ENCODE measurements at regions of chr5 and their contacts with region 1.

Region 1: DNA sequence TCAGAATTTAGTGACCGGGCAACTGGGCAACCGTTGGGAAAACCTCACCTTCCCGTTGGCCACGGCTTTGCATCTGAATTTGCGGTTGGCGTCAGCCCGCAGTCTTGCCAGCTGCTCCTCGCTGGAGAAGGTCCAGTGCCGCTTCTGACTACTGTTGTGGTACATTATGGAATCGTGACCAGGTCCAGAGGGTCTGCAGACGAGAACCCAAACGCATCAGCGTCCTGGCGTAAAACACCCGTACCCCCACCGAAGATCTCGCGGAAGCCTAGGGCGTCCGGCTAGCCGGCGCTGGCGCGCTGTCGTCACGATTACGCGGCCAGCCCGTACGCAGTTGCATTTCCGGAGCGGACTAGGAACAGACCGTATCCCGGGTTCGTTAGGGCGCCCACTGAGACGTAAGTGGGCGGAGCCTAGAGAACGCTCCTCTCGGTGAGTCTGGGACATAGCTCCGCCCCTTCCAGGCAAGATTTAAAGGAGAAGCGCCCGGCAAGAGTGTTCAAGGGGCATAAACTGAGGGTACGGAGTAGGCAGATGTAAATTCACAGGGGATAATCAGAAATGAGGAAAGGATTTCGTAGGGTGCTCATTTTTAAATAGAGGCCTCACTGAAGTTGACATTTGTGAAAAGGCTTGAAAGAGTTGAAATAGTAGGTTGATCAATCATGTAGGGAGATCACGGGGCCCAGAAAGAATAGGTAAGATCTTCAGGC is at the start of gene CCNH:
- DNase-seq: peak; percentile 93
- ATAC-seq: peak; percentile 95
- H3K4me3 ChIP-seq: peak within 1 kb of the TSS; percentile 93
- H3K27ac ChIP-seq: peak within 1 kb of the TSS; percentile 95
- H3K4me1 ChIP-seq: peaks cover 3% of the 10 kb centered on the region; the same call in 1 of the 2 replicates
- H3K27me3 ChIP-seq: no peaks in the 10 kb centered on the region
- CTCF ChIP-seq: no peak
- EP300 ChIP-seq: no peak
- POLR2A ChIP-seq: peak; percentile 97
- RAD21 ChIP-seq: no peak
- polyA plus RNA-seq, gene CCNH: 110 to 116 TPM

Region 2: GRCh38 chr5:86617756-86618576 is 794.8 kb before region 1 on chr5 and contains the start of gene COX7C:
- CTCF ChIA-PET with region 1: no interaction called
- POLR2A ChIA-PET with region 1: no interaction called
- RAD21 ChIA-PET with region 1: no interaction called
- SMC1A ChIA-PET with region 1: no interaction called
- in situ Hi-C with region 1: loop called (anchors 25 kb)
- intact Hi-C with region 1: loop called (anchors 10 kb)
- DNase-seq: peak; percentile 97
- ATAC-seq: peak; percentile 96
- H3K4me3 ChIP-seq: peak within 1 kb of the TSS; percentile 71
- H3K27ac ChIP-seq: peak within 1 kb of the TSS; percentile 80
- H3K4me1 ChIP-seq: peaks cover 8% of the 10 kb centered on the region
- H3K27me3 ChIP-seq: no peaks in the 10 kb centered on the region
- CTCF ChIP-seq: no peak
- EP300 ChIP-seq: no peak
- POLR2A ChIP-seq: peak; percentile 91
- RAD21 ChIP-seq: no peak
- polyA plus RNA-seq, gene COX7C: 1,573 to 1,591 TPM

Region 3: DNA sequence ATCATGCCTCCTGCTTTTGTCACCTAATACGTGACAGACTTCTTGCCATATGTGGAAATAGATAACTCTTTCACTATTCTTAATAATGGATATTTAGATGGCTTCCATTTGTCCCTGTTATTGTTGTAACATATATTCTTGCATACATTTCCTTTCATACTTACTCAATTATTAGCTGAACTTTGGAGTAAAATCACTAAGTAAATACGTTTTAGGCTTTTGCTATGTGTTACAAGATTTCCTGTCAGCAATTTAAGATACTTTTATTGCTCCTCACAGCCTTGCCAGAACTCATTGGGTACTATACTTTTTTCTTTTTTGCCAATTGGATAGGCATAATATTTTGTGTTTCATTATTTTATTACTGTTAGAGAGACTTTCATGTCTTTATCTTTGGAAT is 27.0 kb before region 1 on chr5:
- CTCF ChIA-PET with region 1: no interaction called
- POLR2A ChIA-PET with region 1: no interaction called
- RAD21 ChIA-PET with region 1: no interaction called
- SMC1A ChIA-PET with region 1: no interaction called
- in situ Hi-C with region 1: no loop called
- intact Hi-C with region 1: no loop called
- DNase-seq: no peak
- ATAC-seq: no peak
- H3K4me3 ChIP-seq: no peak overlapping the region
- H3K27ac ChIP-seq: no peak overlapping the region
- H3K4me1 ChIP-seq: no peaks in the 10 kb centered on the region
- H3K27me3 ChIP-seq: no peaks in the 10 kb centered on the region
- CTCF ChIP-seq: no peak
- EP300 ChIP-seq: no peak
- POLR2A ChIP-seq: no peak
- RAD21 ChIP-seq: no peak

Region 4: DNA sequence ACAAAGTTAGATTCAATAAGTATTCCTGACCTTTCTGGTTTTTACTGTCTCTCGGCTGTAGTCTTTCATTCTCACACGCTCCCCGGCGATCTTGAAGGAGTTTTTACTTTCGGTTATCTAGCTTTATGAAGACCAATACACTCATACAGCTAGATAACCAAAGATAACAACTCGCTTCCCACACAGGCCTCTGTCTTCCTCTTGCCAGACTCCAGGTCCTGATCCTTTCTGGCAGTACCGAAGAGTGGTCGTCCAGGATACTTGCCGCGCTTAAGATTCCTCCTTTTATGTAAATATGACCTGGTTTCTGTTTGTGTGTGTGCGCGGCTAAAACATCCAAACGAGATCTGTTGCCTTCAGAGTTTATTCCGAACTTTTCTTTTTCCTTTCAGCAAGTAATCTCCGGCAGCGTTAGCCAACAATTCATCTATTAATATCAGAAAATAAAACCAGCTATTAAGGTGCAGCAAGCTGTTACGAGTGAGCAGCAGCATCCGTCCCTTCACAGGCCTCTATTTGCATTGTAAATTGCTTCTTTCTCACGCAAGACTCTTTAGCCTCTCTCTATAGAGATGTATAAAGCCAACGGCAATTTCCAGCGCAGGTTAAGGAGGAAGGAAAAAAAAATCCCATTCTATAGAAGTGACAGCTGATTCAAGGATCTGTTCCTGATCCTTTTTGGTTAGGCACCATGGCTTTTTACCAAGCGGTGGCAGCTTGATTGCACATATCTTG is 1254.1 kb after region 1 on chr5:
- CTCF ChIA-PET with region 1: no interaction called
- POLR2A ChIA-PET with region 1: no interaction called
- RAD21 ChIA-PET with region 1: no interaction called
- SMC1A ChIA-PET with region 1: no interaction called
- in situ Hi-C with region 1: no loop called
- intact Hi-C with region 1: loop called (anchors 5 kb)
- DNase-seq: no peak
- ATAC-seq: peak; percentile 84
- H3K4me3 ChIP-seq: peak overlapping the region; percentile 88
- H3K27ac ChIP-seq: no peak overlapping the region
- H3K4me1 ChIP-seq: peaks cover 6% of the 10 kb centered on the region
- H3K27me3 ChIP-seq: peaks cover 0 to 34% of the 10 kb centered on the region in 2 experiments; a peak in 3 of 4 replicates
- CTCF ChIP-seq: no peak
- EP300 ChIP-seq: no peak
- POLR2A ChIP-seq: no peak
- RAD21 ChIP-seq: no peak